MCF 10A (cell line): ENCODE measurements at regions of chr3 and their contacts with region 1.

Region 1: GRCh38 chr3:172039436-172040077 is at the start of gene FNDC3B:
- DNase-seq: peak; percentile 94
- H3K4me3 Mint-ChIP-seq: peak within 1 kb of the TSS; percentile 95
- H3K27ac Mint-ChIP-seq: peak within 1 kb of the TSS; percentile 84
- H3K4me1 Mint-ChIP-seq: peaks cover 24% of the 10 kb centered on the region
- H3K27me3 Mint-ChIP-seq: no peaks in the 10 kb centered on the region
- CTCF ChIP-seq: no peak
- total RNA-seq, gene FNDC3B: 149 TPM in 2 replicates

Region 2: DNA sequence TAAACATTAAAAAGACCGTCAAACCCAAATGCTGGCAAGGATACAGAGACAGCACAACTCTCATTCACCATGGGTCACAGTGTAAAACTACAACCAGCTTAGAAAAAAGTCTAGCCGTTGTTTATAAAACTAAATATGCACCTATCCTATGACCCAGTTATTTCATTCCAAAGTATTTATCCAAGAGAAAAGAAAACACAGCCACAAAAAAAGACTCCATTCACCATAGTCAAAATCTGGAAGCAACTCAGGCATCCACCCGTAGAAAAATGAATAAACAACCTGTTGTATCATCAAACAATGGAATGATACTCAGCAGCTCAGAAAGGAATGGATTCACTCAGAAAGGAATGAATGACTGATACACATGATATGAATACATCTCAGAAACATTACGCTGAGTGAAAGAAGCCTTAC is 257.8 kb before region 1 on chr3:
- CTCF ChIA-PET with region 1: no interaction called
- POLR2A ChIA-PET with region 1: no interaction called
- intact Hi-C with region 1: no loop called
- DNase-seq: no peak
- H3K4me3 Mint-ChIP-seq: no peak overlapping the region
- H3K27ac Mint-ChIP-seq: no peak overlapping the region
- H3K4me1 Mint-ChIP-seq: peaks cover 4% of the 10 kb centered on the region
- H3K27me3 Mint-ChIP-seq: no peaks in the 10 kb centered on the region
- CTCF ChIP-seq: no peak

Region 3: GRCh38 chr3:171809821-171810628 is 229.5 kb before region 1 on chr3 and contains the start of gene PLD1:
- CTCF ChIA-PET with region 1: interaction called, 4 read pairs
- POLR2A ChIA-PET with region 1: interaction called, 22 read pairs
- intact Hi-C with region 1: no loop called
- DNase-seq: peak; percentile 90
- H3K4me3 Mint-ChIP-seq: peak within 1 kb of the TSS; percentile 87
- H3K27ac Mint-ChIP-seq: peak within 1 kb of the TSS; percentile 98
- H3K4me1 Mint-ChIP-seq: peaks cover 38% of the 10 kb centered on the region
- H3K27me3 Mint-ChIP-seq: no peaks in the 10 kb centered on the region
- CTCF ChIP-seq: no peak
- total RNA-seq, gene PLD1: 8.0 and 14.8 TPM in 2 replicates

Region 4: GRCh38 chr3:171936191-171936841 is 103.2 kb before region 1 on chr3:
- CTCF ChIA-PET with region 1: no interaction called
- POLR2A ChIA-PET with region 1: no interaction called
- intact Hi-C with region 1: loop called (anchors 10 kb)
- DNase-seq: peak; percentile 75
- H3K4me3 Mint-ChIP-seq: no peak overlapping the region
- H3K27ac Mint-ChIP-seq: no peak overlapping the region
- H3K4me1 Mint-ChIP-seq: peaks cover 4% of the 10 kb centered on the region
- H3K27me3 Mint-ChIP-seq: no peaks in the 10 kb centered on the region
- CTCF ChIP-seq: no peak

Region 5: GRCh38 chr3:172096881-172097420 is 57.4 kb after region 1 on chr3:
- CTCF ChIA-PET with region 1: no interaction called
- POLR2A ChIA-PET with region 1: interaction called, 39 read pairs
- intact Hi-C with region 1: loop called (anchors 5 kb)
- DNase-seq: peak; percentile 90
- H3K4me3 Mint-ChIP-seq: peak overlapping the region; percentile 30
- H3K27ac Mint-ChIP-seq: peak overlapping the region; percentile 82
- H3K4me1 Mint-ChIP-seq: peaks cover 32% of the 10 kb centered on the region
- H3K27me3 Mint-ChIP-seq: no peaks in the 10 kb centered on the region
- CTCF ChIP-seq: no peak

Region 6: DNA sequence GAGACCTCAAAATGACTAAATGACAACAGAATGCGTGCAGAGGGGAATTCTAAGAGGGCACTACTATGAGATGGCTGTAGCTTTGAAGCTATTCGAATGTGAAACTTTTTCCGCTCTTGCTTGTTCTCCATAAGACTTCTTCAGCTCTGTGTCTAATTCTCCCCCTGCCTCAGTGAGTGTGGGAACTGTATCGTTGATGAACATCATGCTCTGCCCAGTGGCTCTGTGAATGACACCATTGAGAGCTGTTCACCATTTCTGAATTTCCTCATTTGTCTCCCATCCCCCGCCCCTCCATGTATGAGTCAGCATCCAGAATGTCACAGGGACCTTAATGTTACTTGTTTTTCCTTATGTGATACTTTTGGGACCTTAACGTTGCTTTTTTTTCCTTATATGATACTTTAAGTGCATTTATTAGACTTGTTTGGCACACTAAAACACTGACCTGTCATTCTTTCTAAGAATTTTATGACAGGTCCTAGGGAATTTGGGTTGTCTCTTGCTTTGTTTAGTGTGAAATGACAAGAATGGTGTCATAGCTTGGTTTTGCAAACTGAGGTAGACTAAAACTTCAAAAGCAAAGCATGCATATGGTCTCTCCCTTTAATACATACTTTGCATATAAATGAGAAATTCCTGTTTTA is 99.4 kb after region 1 on chr3:
- CTCF ChIA-PET with region 1: interaction called, 5 read pairs
- POLR2A ChIA-PET with region 1: interaction called, 36 read pairs
- intact Hi-C with region 1: no loop called
- DNase-seq: peak; percentile 68
- H3K4me3 Mint-ChIP-seq: no peak overlapping the region
- H3K27ac Mint-ChIP-seq: peak overlapping the region; percentile 66
- H3K4me1 Mint-ChIP-seq: peaks cover 52% of the 10 kb centered on the region
- H3K27me3 Mint-ChIP-seq: no peaks in the 10 kb centered on the region
- CTCF ChIP-seq: no peak

Region 7: GRCh38 chr3:172332256-172333041 is 292.9 kb after region 1 on chr3:
- CTCF ChIA-PET with region 1: interaction called, 10 read pairs
- POLR2A ChIA-PET with region 1: interaction called, 3 read pairs
- intact Hi-C with region 1: loop called (anchors 5 kb)
- DNase-seq: peak; percentile 77
- H3K4me3 Mint-ChIP-seq: no peak overlapping the region
- H3K27ac Mint-ChIP-seq: no peak overlapping the region
- H3K4me1 Mint-ChIP-seq: no peaks in the 10 kb centered on the region
- H3K27me3 Mint-ChIP-seq: no peaks in the 10 kb centered on the region
- CTCF ChIP-seq: peak; percentile 83